ENCODE measurements at regions of chr17 and their contacts with region 1.

Region 1: GRCh38 chr17:40098846-40099618 is 1.4 kb downstream of the NR1D1 start:
- DNase-seq: peak; percentile 97
- H3K4me3 Mint-ChIP-seq: peak overlapping the region; percentile 94
- H3K27ac Mint-ChIP-seq: peak overlapping the region; percentile 86
- H3K4me1 Mint-ChIP-seq: peaks cover 73% of the 10 kb centered on the region
- H3K27me3 Mint-ChIP-seq: peaks cover 4% of the 10 kb centered on the region

Region 2: GRCh38 chr17:40068917-40069750 is 29.9 kb before region 1 on chr17:
- intact Hi-C with region 1: loop called (anchors 2 kb)
- DNase-seq: peak; percentile 91
- H3K4me3 Mint-ChIP-seq: peak overlapping the region; percentile 85
- H3K27ac Mint-ChIP-seq: peak overlapping the region; percentile 89
- H3K4me1 Mint-ChIP-seq: peaks cover 30% of the 10 kb centered on the region
- H3K27me3 Mint-ChIP-seq: peaks cover 13% of the 10 kb centered on the region

Region 3: GRCh38 chr17:40121181-40122135 is 22.4 kb after region 1 on chr17 and contains the start of gene MSL1:
- intact Hi-C with region 1: loop called (anchors 1 kb)
- DNase-seq: peak; percentile 97
- H3K4me3 Mint-ChIP-seq: peak within 1 kb of the TSS; percentile 90
- H3K27ac Mint-ChIP-seq: peak within 1 kb of the TSS; percentile 81
- H3K4me1 Mint-ChIP-seq: peaks cover 32% of the 10 kb centered on the region
- H3K27me3 Mint-ChIP-seq: no peaks in the 10 kb centered on the region
- total RNA-seq, gene MSL1: 92.7 and 98.5 TPM in 2 replicates

Region 4: GRCh38 chr17:40139566-40140058 is 40.6 kb after region 1 on chr17:
- intact Hi-C with region 1: loop called (anchors 1 kb)
- DNase-seq: no peak
- H3K4me3 Mint-ChIP-seq: peak overlapping the region; percentile 97
- H3K27ac Mint-ChIP-seq: peak overlapping the region; percentile 99
- H3K4me1 Mint-ChIP-seq: peaks cover 30% of the 10 kb centered on the region
- H3K27me3 Mint-ChIP-seq: no peaks in the 10 kb centered on the region

Region 5: DNA sequence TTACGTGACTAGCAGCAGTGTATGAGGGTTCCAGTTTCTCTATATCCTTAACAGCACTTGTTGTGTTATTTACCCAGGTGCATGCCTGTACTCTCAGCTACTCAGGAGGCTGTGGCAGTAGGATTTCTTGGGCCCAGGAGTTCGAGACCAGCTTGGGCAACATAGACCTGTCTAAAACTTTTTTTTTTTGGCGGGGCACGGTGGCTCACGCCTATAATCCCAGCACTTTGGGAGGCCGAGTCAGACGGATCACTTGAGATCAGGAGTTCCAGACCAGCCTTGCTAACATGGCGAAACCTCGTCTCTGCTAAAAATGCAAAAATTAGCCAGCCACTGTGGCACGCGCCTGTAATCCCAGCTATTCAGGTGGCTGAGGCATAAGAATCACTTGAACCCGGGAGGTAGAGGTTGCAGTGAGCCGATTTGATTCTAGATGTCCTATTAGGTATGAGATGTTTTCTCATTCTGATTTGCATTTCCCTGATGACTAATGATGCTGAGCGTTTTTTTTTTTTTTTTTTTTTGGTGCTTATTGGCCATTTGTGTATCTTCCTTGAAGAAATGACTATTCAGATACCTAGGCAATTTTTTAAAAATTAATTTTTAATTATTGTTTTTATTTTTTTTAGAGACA is 54.7 kb after region 1 on chr17:
- intact Hi-C with region 1: loop called (anchors 1 kb)
- DNase-seq: no peak
- H3K4me3 Mint-ChIP-seq: no peak overlapping the region
- H3K27ac Mint-ChIP-seq: peak overlapping the region; percentile 98
- H3K4me1 Mint-ChIP-seq: peaks cover 24% of the 10 kb centered on the region
- H3K27me3 Mint-ChIP-seq: no peaks in the 10 kb centered on the region

Region 6: DNA sequence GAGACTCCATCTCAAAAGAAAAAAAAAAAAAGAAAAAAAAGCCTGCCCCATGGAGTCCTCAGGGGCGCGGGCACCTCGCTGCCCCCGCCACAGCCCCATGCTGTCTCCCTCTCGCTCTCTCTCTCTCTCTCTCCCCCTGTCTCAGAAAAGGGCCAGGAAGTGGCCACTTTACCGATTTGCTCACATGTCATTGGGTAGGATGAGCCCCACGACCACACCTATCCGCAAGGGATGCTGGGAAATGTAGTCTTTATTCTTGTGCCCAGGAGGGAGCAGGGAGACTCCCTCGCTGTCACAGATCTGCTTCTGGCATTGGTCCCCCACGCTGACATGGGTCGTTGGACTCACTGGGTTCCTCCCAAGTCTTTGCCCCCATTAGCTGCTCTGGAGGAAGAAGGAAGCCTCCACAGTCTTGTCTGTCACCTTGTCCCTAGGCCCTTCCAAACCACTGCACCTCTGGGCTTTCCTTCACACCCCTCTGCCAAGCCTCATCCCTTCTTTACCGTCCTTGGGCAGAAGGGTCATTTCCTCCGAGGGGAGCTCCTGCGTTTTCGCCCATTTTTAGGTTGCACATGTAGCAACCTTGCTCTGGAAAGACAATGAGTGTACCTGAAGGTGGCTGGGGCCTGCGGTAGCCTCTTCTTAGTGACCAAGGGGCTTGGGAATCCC is 272.4 kb after region 1 on chr17:
- intact Hi-C with region 1: no loop called
- DNase-seq: peak; percentile 81
- H3K4me3 Mint-ChIP-seq: no peak overlapping the region
- H3K27ac Mint-ChIP-seq: peak overlapping the region; percentile 35
- H3K4me1 Mint-ChIP-seq: peaks cover 27% of the 10 kb centered on the region
- H3K27me3 Mint-ChIP-seq: no peaks in the 10 kb centered on the region